Panc1 (cell line): ENCODE measurements at regions of chr22 and their contacts with region 1.

Region 1: GRCh38 chr22:19909350-19910179 is 32.0 kb upstream of the COMT start:
- DNase-seq: peak; percentile 62
- ATAC-seq: peak; percentile 97
- H3K4me3 ChIP-seq: no peak overlapping the region
- H3K27ac ChIP-seq: peak overlapping the region; percentile 68
- H3K4me1 ChIP-seq: peaks cover 3% of the 10 kb centered on the region; the same call in 1 of the 2 replicates
- H3K27me3 ChIP-seq: no peaks in the 10 kb centered on the region
- CTCF ChIP-seq: peak; percentile 85

Region 2: GRCh38 chr22:19730655-19731360 is 178.8 kb before region 1 on chr22:
- CTCF ChIA-PET with region 1: interaction called, 19 read pairs
- POLR2A ChIA-PET with region 1: no interaction called
- in situ Hi-C with region 1: no loop called
- intact Hi-C with region 1: no loop called
- DNase-seq: peak; percentile 24
- ATAC-seq: peak; percentile 94
- H3K4me3 ChIP-seq: peak overlapping the region; percentile 40 to 55
- H3K27ac ChIP-seq: no peak overlapping the region
- H3K4me1 ChIP-seq: no peaks in the 10 kb centered on the region; the same call in 1 of the 2 replicates
- H3K27me3 ChIP-seq: no peaks in the 10 kb centered on the region
- CTCF ChIP-seq: peak; percentile 90

Region 3: DNA sequence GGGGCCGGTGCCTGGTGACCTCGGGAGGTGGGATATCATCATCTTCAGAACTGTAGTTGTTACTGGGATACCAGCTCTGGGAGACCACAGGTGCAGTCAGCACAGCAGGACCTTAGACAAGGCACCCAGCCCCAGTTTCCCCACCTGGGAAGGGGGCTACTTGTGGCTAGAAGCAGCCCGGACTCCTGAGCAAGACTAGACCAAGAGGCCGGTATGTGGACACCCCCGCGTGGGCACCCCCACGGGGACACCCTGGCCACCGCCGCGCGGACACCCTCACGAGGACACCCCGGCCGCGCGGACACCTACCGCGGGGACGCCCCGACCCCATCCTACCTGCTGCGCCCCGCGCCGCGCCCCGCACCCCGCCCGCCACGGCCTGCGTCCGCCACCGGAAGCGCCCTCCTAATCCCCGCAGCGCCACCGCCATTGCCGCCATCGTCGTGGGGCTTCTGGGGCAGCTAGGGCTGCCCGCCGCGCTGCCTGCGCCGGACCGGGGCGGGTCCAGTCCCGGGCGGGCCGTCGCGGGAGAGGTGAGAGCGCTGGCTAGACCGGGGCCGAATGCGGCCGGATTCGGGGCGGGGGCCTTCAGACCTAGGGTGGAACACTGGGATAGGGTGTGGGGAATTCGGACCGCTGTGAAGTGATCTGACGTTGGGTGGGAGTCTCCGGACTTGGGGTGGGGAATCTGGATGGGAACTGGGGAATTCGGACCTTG is 32.0 kb after region 1 on chr22 and contains the starts of genes COMT and TXNRD2:
- CTCF ChIA-PET with region 1: no interaction called
- POLR2A ChIA-PET with region 1: no interaction called
- in situ Hi-C with region 1: no loop called
- intact Hi-C with region 1: no loop called
- DNase-seq: no peak
- ATAC-seq: peak; percentile 87
- H3K4me3 ChIP-seq: peak within 1 kb of the TSS; percentile 68
- H3K27ac ChIP-seq: peak within 1 kb of the TSS; percentile 96
- H3K4me1 ChIP-seq: peaks cover 19% of the 10 kb centered on the region
- H3K27me3 ChIP-seq: no peaks in the 10 kb centered on the region
- CTCF ChIP-seq: no peak
- total RNA-seq, gene COMT: 108 TPM
- total RNA-seq, gene TXNRD2: 29.5 TPM

Region 4: DNA sequence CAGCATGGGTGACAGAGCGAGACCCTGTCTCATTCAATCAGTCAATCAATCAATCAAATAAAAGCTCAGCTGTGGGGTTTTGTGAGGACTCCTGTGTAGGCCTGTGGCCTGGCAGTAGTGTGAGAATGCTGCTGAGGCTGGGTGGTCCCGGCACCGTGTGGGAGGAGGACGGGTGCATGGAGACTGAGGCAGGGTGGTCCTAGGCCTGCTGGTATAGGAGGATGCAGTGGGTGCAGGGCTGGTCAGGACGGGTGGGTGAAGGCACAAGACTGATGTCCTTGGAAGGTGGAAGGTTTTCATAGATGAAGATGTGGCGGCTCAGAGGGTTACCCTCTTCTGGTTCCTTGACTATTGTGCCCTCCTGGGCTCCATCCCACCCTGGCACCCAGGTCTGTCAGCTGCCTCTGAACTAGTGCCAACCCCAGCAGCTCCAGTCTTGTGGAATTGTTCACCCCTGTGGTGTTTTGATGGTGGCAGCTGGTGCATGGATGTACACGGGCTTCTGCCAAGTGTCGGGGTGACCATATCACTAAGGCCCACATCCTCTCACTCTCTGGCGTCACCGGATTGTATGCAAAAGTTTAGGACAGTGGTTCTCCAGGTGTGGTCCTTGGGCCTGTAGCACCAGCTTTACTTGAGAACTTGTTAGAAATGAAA is 135.1 kb after region 1 on chr22:
- CTCF ChIA-PET with region 1: no interaction called
- POLR2A ChIA-PET with region 1: no interaction called
- in situ Hi-C with region 1: no loop called
- intact Hi-C with region 1: no loop called
- DNase-seq: no peak
- ATAC-seq: no peak
- H3K4me3 ChIP-seq: no peak overlapping the region
- H3K27ac ChIP-seq: no peak overlapping the region
- H3K4me1 ChIP-seq: no peaks in the 10 kb centered on the region
- H3K27me3 ChIP-seq: no peaks in the 10 kb centered on the region
- CTCF ChIP-seq: no peak